Esophagus muscularis mucosa (tissue), 4 donors: ENCODE measurements at regions of chr6 and their contacts with region 1.

Region 1: DNA sequence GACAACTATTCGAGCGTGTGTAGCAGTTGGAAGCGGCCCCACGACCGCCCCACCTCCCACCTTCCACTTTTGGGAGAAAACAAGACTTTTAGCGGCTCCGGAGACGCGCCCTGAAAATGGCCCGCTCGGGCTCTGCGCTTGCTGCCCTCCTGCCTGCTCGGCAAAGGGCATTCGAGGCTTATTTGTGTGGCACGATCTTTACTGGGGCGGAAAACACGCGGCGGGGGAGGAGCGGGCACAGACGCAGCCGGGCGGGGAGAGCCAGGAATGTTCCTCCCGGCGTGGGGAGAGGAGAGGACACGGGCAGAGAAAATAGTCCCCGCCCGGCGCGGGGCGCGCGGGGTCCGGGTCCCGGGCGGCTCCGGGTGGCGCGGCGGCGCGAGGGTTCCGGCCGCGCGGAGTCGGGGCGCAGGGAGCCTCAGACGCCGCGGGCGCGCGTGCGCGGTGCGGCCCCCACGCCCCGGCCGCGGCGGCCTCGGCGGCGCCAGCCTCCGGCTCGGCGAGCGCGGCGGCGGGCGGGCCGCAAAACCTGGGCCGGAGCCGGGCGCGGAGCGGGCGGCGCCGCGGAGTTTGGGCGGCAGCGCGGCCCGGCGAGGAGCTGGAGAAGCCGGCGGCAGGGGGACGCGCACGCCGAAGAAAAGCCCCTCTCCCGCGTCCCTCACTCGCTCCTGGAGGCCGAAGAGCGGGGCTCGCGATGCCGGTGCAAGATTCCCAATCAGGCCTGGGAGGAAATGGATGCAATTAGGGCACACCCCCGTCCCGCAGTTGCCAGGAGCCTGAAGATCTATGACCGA is 90.0 kb upstream of the ARID1B start:
- DNase-seq: peak; percentile 98
- H3K4me3 ChIP-seq: peak overlapping the region; percentile 63 to 81 (median 76)
- H3K27ac ChIP-seq: peak overlapping the region; percentile 93 to 99 (median 97)
- H3K4me1 ChIP-seq: peaks cover 0 to 21% (median 18%) of the 10 kb centered on the region in 4 donors
- H3K27me3 ChIP-seq: no peaks in the 10 kb centered on the region
- CTCF ChIP-seq: no peak
- EP300 ChIP-seq: peak; percentile 14
- POLR2A ChIP-seq: peak; percentile 78

Region 2: DNA sequence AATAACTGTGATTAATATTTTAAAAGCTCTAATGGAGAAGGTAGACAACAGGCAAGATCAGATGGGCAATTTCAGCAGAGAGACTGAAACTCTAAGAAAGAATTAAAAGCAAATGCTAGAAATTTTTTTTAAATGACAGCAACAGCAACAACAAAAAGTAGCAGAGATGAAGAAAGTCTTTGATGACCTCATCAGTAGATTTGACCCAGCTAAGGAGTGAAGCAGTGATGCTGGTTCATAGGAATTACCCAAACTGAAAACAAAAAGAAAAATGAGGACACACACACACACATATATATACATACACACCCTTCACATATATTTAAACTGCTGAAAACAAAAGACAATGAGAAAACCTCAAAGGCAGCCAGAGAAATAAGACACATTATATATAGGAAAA is 107.6 kb before region 1 on chr6:
- intact Hi-C with region 1: no loop called
- DNase-seq: no peak
- H3K4me3 ChIP-seq: no peak overlapping the region
- H3K27ac ChIP-seq: no peak overlapping the region
- H3K4me1 ChIP-seq: no peaks in the 10 kb centered on the region
- H3K27me3 ChIP-seq: no peaks in the 10 kb centered on the region
- CTCF ChIP-seq: no peak
- EP300 ChIP-seq: no peak
- POLR2A ChIP-seq: no peak

Region 3: GRCh38 chr6:156719720-156720563 is 32.8 kb after region 1 on chr6:
- intact Hi-C with region 1: loop called (anchors 5 kb)
- DNase-seq: peak; percentile 97
- H3K4me3 ChIP-seq: peak overlapping the region; percentile 48 to 55 (median 52)
- H3K27ac ChIP-seq: peak overlapping the region; percentile 84 to 92 (median 88)
- H3K4me1 ChIP-seq: peaks cover 16 to 34% (median 29%) of the 10 kb centered on the region in 4 donors
- H3K27me3 ChIP-seq: no peaks in the 10 kb centered on the region
- CTCF ChIP-seq: peak in 1 of 3 experiments; percentile 14
- EP300 ChIP-seq: no peak
- POLR2A ChIP-seq: no peak

Region 4: DNA sequence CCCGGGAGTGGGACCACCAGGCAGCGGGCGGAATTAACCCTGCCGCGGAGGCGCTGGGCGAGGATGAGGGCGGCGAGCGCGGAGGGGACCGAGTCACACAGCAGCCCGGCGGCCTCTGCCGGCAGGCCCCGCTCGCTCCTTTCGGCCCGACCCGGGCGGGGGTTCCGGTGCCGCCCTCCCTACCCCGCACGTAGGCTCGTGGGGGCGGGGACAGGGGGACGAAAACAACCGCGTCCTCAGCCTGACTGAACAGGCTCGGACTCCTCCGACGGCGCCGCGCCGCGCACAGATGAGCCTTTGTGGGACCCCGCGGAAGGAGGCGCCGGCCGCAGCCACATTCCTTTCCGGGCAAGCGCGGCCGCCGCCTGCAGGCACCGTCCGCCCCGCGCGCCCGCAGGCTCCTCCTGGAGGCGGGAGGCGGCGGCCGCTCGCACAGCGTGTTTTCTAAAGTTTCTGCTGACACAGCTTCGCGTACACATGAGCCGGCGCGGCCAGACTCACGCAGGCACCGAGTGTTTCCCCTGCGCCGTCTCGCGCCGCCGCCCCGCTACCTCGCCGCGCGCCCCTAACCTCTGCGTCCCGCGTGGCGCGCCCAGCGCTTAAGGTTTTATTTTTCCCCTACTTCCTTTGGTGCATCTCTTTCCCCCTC is 334.3 kb after region 1 on chr6:
- intact Hi-C with region 1: loop called (anchors 2 kb)
- DNase-seq: peak; percentile 96
- H3K4me3 ChIP-seq: peak overlapping the region; percentile 74 to 93 (median 80)
- H3K27ac ChIP-seq: peak overlapping the region; percentile 96 to 100 (median 98)
- H3K4me1 ChIP-seq: peaks cover 26 to 59% (median 41%) of the 10 kb centered on the region in 4 donors
- H3K27me3 ChIP-seq: no peaks in the 10 kb centered on the region
- CTCF ChIP-seq: peak; percentile 27 to 56 (median 28)
- EP300 ChIP-seq: no peak
- POLR2A ChIP-seq: peak; percentile 95

Region 5: DNA sequence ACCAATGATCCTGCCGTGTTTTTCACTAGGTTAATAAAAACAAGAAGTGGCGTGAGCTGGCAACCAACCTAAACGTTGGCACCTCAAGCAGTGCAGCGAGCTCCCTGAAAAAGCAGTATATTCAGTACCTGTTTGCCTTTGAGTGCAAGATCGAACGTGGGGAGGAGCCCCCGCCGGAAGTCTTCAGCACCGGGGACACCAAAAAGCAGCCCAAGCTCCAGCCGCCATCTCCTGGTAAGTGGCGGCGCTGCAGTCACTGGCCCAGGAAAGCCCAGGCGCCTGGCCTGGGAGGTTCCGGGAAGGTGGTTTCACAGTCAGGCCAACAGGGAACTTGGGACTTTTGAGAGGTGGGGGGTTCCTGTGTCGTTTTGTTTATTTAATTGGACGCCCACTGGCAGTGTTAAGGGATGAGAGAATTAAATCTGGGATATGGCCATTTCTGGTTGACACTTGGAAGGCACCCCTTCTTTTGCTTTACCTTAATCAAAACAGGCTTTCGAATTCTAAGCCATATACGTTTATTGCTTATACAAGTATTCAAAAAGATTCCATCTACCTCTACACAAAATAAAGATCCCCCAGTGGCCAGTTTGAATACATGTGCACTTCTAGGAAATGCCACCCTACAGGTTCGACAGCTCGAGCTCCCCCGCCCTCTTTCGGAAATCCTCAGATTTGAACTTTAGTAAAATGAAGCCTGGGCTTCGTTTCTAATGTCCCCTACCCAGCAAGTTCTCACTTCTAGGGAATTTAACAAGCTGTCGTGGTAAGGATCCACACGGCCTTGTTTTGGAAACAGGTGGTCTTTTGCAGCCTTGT is 497.2 kb after region 1 on chr6:
- intact Hi-C with region 1: loop called (anchors 10 kb)
- DNase-seq: no peak
- H3K4me3 ChIP-seq: peak overlapping the region; percentile 10 to 32 (median 23)
- H3K27ac ChIP-seq: peak overlapping the region in 3 of 4 donors; percentile 7 to 54 (median 28)
- H3K4me1 ChIP-seq: peaks cover 6 to 35% (median 33%) of the 10 kb centered on the region in 4 donors
- H3K27me3 ChIP-seq: no peaks in the 10 kb centered on the region
- CTCF ChIP-seq: peak; percentile 93 to 99 (median 93)
- EP300 ChIP-seq: no peak
- POLR2A ChIP-seq: no peak